SK-N-SH (cell line): ENCODE measurements at regions of chr7 and their contacts with region 1.

Region 1: GRCh38 chr7:82572195-82572880 is 128.8 kb upstream of the CACNA2D1 start:
- DNase-seq: peak; percentile 89
- H3K4me3 ChIP-seq: peak overlapping the region; percentile 18 to 27; a peak in 2 of 4 replicates
- H3K27ac ChIP-seq: peak overlapping the region in 1 of 2 experiments; percentile 25; a peak in 1 of 4 replicates
- H3K4me1 ChIP-seq: peaks cover 4 to 11% of the 10 kb centered on the region in 2 experiments; a peak in 2 of 4 replicates
- H3K27me3 ChIP-seq: no peaks in the 10 kb centered on the region
- CTCF ChIP-seq: peak; percentile 100
- EP300 ChIP-seq: peak in 1 of 2 experiments; percentile 52; a peak in 2 of 4 replicates
- RAD21 ChIP-seq: peak; percentile 100

Region 2: GRCh38 chr7:82049891-82050533 is 522.3 kb before region 1 on chr7:
- CTCF ChIA-PET with region 1: interaction called, 17 read pairs
- POLR2A ChIA-PET with region 1: no interaction called
- DNase-seq: no peak
- H3K4me3 ChIP-seq: no peak overlapping the region
- H3K27ac ChIP-seq: peak overlapping the region; percentile 91 to 97
- H3K4me1 ChIP-seq: peaks cover 50 to 52% of the 10 kb centered on the region in 2 experiments
- H3K27me3 ChIP-seq: no peaks in the 10 kb centered on the region
- CTCF ChIP-seq: no peak
- EP300 ChIP-seq: peak in 1 of 2 experiments; percentile 85; a peak in 2 of 4 replicates
- RAD21 ChIP-seq: no peak

Region 3: DNA sequence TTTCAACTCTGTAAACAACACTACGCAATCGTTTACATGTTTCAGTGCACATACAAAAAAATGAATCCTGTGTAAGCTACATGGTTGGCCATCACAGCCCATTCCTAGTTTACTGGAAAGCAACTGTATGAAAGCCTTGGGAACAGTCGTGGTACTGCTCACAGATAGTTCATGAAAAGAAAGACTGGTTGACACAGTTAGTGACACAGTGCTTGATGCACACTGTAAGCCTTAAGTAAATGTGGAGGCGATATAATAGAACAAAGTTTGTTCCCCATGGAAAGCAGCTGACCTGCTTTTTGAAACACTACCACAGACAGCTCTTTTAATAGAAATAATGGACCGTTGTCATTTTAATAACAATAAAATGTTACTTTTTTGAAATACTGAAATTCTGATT is 133.8 kb before region 1 on chr7:
- CTCF ChIA-PET with region 1: interaction called, 12 read pairs
- POLR2A ChIA-PET with region 1: no interaction called
- DNase-seq: no peak
- H3K4me3 ChIP-seq: no peak overlapping the region
- H3K27ac ChIP-seq: peak overlapping the region in 1 of 2 experiments; percentile 36; a peak in 2 of 4 replicates
- H3K4me1 ChIP-seq: peaks cover 8 to 32% of the 10 kb centered on the region in 2 experiments; a peak in 3 of 4 replicates
- H3K27me3 ChIP-seq: no peaks in the 10 kb centered on the region
- CTCF ChIP-seq: no peak
- EP300 ChIP-seq: no peak
- RAD21 ChIP-seq: no peak

Region 4: GRCh38 chr7:82559193-82559805 is 13.0 kb before region 1 on chr7:
- CTCF ChIA-PET with region 1: interaction called, 14 read pairs
- POLR2A ChIA-PET with region 1: no interaction called
- DNase-seq: peak; percentile 72
- H3K4me3 ChIP-seq: peak overlapping the region; percentile 42 to 47
- H3K27ac ChIP-seq: peak overlapping the region in 1 of 2 experiments; percentile 71; a peak in 2 of 4 replicates
- H3K4me1 ChIP-seq: peaks cover 16 to 19% of the 10 kb centered on the region in 2 experiments; a peak in 3 of 4 replicates
- H3K27me3 ChIP-seq: no peaks in the 10 kb centered on the region
- CTCF ChIP-seq: no peak
- EP300 ChIP-seq: peak in 1 of 2 experiments; percentile 34; a peak in 1 of 4 replicates
- RAD21 ChIP-seq: no peak